Psoas muscle (tissue), 8 donors: ENCODE measurements at regions of chr14 and their contacts with region 1.

Region 1: GRCh38 chr14:102516531-102517415 is 7.2 kb upstream of the ANKRD9 start:
- DNase-seq: peak; percentile 61 to 81
- ATAC-seq: peak; percentile 78 to 89 (median 86)
- H3K4me3 ChIP-seq: peak overlapping the region; percentile 75
- H3K27ac ChIP-seq: peak overlapping the region; percentile 46
- H3K4me1 ChIP-seq: peaks cover 5% of the 10 kb centered on the region
- H3K27me3 ChIP-seq: no peaks in the 10 kb centered on the region
- CTCF ChIP-seq: peak; percentile 100

Region 2: GRCh38 chr14:102437997-102438915 is 78.5 kb before region 1 on chr14:
- intact Hi-C with region 1: loop called (anchors 1 to 2 kb)
- DNase-seq: peak; percentile 90 to 94
- ATAC-seq: peak; percentile 71 to 86 (median 82)
- H3K4me3 ChIP-seq: peak overlapping the region; percentile 64
- H3K27ac ChIP-seq: no peak overlapping the region
- H3K4me1 ChIP-seq: peaks cover 25% of the 10 kb centered on the region
- H3K27me3 ChIP-seq: no peaks in the 10 kb centered on the region
- CTCF ChIP-seq: peak; percentile 80

Region 3: GRCh38 chr14:102474934-102475333 is 41.8 kb before region 1 on chr14:
- intact Hi-C with region 1: loop called in 1 of 2 experiments (anchors 5 kb)
- DNase-seq: peak; percentile 85 to 95
- ATAC-seq: peak; percentile 95 to 97 (median 95)
- H3K4me3 ChIP-seq: peak overlapping the region; percentile 26
- H3K27ac ChIP-seq: peak overlapping the region; percentile 67
- H3K4me1 ChIP-seq: peaks cover 31% of the 10 kb centered on the region
- H3K27me3 ChIP-seq: no peaks in the 10 kb centered on the region
- CTCF ChIP-seq: no peak